CD4-positive, alpha-beta T cell (primary cell): ENCODE measurements at regions of chr9 and their contacts with region 1.

Region 1: DNA sequence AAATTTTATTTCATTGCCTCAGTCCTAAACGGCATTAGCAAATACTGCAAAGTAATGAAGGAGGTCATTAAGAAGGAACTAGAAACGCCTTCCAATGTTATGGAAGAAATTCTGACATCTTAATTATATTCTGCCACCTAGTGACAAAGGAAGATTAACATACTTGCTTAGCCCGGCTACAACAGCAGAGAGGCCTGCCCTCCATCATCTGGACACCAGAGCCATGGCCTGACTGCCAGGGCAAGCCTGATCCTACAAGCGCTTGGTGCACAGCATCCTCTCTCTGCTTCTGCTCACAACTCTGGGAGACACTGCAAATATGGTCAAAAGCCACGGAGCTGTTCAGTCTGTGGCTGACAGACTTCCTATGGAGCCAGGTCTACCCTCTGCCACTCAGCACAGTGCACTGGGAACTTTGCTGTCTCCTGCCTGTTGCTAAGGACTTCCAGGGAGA is 87.3 kb upstream of the SLC44A1 start:
- DNase-seq: peak in 8 of 14 experiments; percentile 1 to 68 (median 30)
- ATAC-seq: peak; percentile 80
- H3K4me3 ChIP-seq: no peak overlapping the region
- H3K4me3 Mint-ChIP-seq: no peak overlapping the region
- H3K27ac ChIP-seq: no peak overlapping the region
- H3K27ac Mint-ChIP-seq: no peak overlapping the region
- H3K4me1 ChIP-seq: peaks cover 12% of the 10 kb centered on the region
- H3K4me1 Mint-ChIP-seq: peaks cover 34% of the 10 kb centered on the region
- H3K27me3 ChIP-seq: no peaks in the 10 kb centered on the region
- H3K27me3 Mint-ChIP-seq: no peaks in the 10 kb centered on the region
- CTCF ChIP-seq: peak; percentile 72

Region 2: DNA sequence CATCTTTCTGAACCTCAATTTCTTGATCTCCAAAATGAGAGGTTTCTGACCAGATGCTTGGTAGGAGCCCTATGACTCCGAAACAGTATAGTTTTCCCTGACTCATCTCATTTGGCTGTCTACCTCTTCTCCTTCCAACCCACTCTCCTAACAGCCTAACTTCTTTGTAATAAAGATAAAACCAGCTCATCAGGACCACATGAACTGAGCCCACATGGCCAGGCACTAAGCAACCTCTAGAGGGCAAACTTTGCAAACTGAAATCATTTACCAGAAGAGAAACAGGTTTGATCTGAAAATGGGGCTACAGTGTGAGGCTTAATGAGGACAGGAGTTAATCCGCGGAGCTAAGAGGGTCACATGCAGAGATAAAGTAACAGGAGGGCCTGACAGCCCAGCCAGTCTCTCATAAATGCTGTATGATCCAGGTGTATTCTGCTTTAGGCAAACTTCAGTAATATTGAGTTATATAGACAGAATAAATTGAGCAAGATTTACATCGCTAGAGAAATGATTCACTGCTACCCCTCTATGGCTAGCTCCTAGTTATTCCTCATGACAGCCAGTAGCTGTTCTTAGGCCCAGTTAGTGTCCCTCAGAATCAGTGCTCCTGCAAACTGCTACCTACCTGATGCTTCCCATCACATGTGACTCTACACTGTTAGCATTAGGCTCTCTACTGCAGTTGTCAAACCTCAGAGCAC is 293.8 kb before region 1 on chr9:
- CTCF ChIA-PET with region 1: interaction called, 3 read pairs
- POLR2A ChIA-PET with region 1: no interaction called
- intact Hi-C with region 1: loop called (anchors 1 kb)
- DNase-seq: peak; percentile 9 to 78 (median 32)
- ATAC-seq: peak; percentile 92
- H3K4me3 ChIP-seq: no peak overlapping the region
- H3K4me3 Mint-ChIP-seq: no peak overlapping the region
- H3K27ac ChIP-seq: no peak overlapping the region
- H3K27ac Mint-ChIP-seq: no peak overlapping the region
- H3K4me1 ChIP-seq: no peaks in the 10 kb centered on the region
- H3K4me1 Mint-ChIP-seq: peaks cover 12% of the 10 kb centered on the region
- H3K27me3 ChIP-seq: no peaks in the 10 kb centered on the region
- H3K27me3 Mint-ChIP-seq: no peaks in the 10 kb centered on the region
- CTCF ChIP-seq: peak; percentile 77

Region 3: DNA sequence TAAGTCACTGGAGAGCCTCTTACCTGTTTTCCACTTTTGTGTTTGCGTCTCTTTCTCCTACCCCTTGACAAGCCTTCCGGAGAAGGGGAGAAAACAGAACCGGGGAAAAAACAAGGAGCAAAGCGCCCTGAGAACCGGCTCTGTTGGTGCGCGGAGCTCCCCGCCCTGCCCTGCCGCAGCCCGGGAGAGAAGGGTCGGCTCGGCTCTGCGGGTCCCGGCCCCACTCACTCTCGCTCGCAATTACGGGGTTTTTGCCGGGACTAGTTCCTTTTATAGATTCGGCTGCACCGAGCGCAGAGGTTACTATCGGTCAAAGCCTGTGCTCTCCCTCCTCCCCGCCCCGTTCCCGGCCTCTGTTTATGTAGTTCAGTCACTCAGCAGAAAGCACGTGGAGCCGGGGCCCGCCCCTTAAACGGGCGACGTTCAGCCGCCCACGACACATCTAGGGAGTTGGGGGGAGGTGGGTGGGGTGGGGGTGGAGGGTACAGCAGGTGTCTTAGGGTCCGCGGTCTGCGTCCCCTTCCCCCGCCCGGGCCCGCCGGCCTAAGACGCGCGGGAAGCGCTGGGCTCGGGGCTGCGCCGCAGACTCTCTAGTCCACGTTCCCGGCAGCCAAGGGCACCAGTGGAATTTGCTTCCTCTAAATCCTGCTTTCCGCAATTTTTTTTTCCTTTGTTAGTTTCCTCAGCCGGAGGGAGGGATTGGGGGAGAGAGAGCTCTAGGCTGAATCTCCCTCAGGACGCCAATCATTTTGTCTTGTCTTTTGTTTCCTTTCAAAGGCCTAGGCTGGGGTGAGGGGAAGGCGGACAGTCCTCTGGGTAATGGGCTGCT is 229.0 kb before region 1 on chr9 and contains the start of gene ABCA1:
- CTCF ChIA-PET with region 1: no interaction called
- POLR2A ChIA-PET with region 1: no interaction called
- intact Hi-C with region 1: loop called (anchors 1 to 2 kb)
- DNase-seq: peak; percentile 57 to 89 (median 74)
- ATAC-seq: peak; percentile 81
- H3K4me3 ChIP-seq: peak within 1 kb of the TSS; percentile 69
- H3K4me3 Mint-ChIP-seq: peak within 1 kb of the TSS; percentile 92
- H3K27ac ChIP-seq: peak within 1 kb of the TSS in 1 of 2 donors; percentile 15
- H3K27ac Mint-ChIP-seq: peak within 1 kb of the TSS; percentile 86
- H3K4me1 ChIP-seq: peaks cover 27% of the 10 kb centered on the region
- H3K4me1 Mint-ChIP-seq: peaks cover 26% of the 10 kb centered on the region
- H3K27me3 ChIP-seq: no peaks in the 10 kb centered on the region
- H3K27me3 Mint-ChIP-seq: no peaks in the 10 kb centered on the region
- CTCF ChIP-seq: no peak
- total RNA-seq, gene ABCA1: 14.1 to 16.9 TPM

Region 4: DNA sequence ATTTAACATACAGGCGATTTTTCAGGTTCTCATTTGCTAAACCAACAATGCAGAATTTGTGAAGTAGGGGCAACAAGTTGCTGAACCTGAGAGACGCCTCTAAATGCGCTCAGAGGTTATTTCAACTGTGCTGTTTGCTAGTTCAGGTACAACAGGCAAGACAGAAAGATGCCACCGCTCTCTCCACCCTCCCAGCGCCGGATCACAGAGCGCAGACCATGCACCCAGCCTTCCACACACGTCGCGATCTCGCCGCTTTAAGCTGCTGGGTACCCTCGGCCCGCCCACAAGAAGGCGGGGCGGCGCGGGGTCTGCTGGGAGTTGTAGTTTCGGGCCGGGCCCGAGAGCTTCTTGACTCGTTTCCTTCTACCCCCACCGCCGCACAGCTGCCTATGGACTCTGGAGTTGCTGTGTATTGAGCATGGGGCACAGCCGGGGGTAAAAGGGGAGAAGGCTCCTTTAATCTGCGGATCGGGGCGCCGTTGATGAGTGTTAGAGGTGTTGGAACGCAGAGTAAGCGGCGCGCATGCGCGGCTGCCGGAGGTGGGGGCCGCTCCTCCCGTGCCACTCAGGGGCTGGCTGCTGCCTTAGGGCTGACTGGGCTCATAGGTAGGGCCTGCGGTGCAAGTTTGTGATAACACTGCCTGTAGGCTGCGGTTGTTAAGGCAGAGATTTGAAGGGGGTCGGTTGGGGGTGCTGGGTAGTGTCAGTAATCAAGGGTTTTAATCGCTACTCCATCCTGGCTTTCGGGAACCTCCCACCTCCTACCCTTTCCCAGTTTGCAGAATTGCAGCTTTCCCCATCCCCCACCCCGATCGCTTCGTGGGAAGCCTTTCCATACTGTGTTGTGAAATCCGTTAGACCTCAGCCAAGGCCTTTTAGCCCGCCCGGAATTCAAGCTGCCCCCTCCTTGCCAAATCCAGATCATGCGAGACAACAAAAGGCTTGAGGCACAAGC is 188.9 kb before region 1 on chr9:
- CTCF ChIA-PET with region 1: no interaction called
- POLR2A ChIA-PET with region 1: no interaction called
- intact Hi-C with region 1: loop called in 1 of 2 experiments (anchors 10 kb)
- DNase-seq: peak; percentile 80 to 92 (median 86)
- ATAC-seq: peak; percentile 97
- H3K4me3 ChIP-seq: peak overlapping the region; percentile 75
- H3K4me3 Mint-ChIP-seq: peak overlapping the region; percentile 95
- H3K27ac ChIP-seq: no peak overlapping the region
- H3K27ac Mint-ChIP-seq: peak overlapping the region; percentile 77
- H3K4me1 ChIP-seq: peaks cover 14% of the 10 kb centered on the region
- H3K4me1 Mint-ChIP-seq: peaks cover 27% of the 10 kb centered on the region
- H3K27me3 ChIP-seq: no peaks in the 10 kb centered on the region
- H3K27me3 Mint-ChIP-seq: peaks cover 8% of the 10 kb centered on the region
- CTCF ChIP-seq: no peak

Region 5: DNA sequence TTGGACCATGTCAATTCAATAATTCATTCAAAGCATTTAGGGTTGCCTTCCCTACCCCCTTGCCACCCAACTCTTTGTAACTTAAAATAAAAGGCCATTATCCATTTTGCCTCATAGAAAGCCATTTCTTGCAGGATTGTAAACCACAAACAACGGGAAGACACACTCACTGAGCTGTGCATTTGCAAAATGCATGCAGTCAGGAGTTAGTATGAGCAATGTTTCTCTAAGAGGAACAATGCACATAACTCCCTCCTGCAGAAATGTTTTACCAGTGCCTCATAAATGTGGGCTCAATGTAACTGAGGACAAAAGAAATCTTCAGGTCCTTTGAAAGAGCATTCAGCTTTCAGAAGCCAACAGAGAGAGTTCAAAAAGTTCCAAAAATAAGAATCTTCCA is 130.7 kb before region 1 on chr9:
- CTCF ChIA-PET with region 1: no interaction called
- POLR2A ChIA-PET with region 1: no interaction called
- intact Hi-C with region 1: no loop called
- DNase-seq: no peak
- ATAC-seq: no peak
- H3K4me3 ChIP-seq: no peak overlapping the region
- H3K4me3 Mint-ChIP-seq: no peak overlapping the region
- H3K27ac ChIP-seq: no peak overlapping the region
- H3K27ac Mint-ChIP-seq: no peak overlapping the region
- H3K4me1 ChIP-seq: no peaks in the 10 kb centered on the region
- H3K4me1 Mint-ChIP-seq: no peaks in the 10 kb centered on the region
- H3K27me3 ChIP-seq: no peaks in the 10 kb centered on the region
- H3K27me3 Mint-ChIP-seq: no peaks in the 10 kb centered on the region
- CTCF ChIP-seq: no peak

Region 6: GRCh38 chr9:105093685-105094084 is 63.5 kb before region 1 on chr9:
- CTCF ChIA-PET with region 1: no interaction called
- POLR2A ChIA-PET with region 1: no interaction called
- intact Hi-C with region 1: loop called in 1 of 2 experiments (anchors 10 kb)
- DNase-seq: no peak
- ATAC-seq: no peak
- H3K4me3 ChIP-seq: no peak overlapping the region
- H3K4me3 Mint-ChIP-seq: no peak overlapping the region
- H3K27ac ChIP-seq: no peak overlapping the region
- H3K27ac Mint-ChIP-seq: no peak overlapping the region
- H3K4me1 ChIP-seq: no peaks in the 10 kb centered on the region
- H3K4me1 Mint-ChIP-seq: no peaks in the 10 kb centered on the region
- H3K27me3 ChIP-seq: no peaks in the 10 kb centered on the region
- H3K27me3 Mint-ChIP-seq: no peaks in the 10 kb centered on the region
- CTCF ChIP-seq: no peak

Region 7: DNA sequence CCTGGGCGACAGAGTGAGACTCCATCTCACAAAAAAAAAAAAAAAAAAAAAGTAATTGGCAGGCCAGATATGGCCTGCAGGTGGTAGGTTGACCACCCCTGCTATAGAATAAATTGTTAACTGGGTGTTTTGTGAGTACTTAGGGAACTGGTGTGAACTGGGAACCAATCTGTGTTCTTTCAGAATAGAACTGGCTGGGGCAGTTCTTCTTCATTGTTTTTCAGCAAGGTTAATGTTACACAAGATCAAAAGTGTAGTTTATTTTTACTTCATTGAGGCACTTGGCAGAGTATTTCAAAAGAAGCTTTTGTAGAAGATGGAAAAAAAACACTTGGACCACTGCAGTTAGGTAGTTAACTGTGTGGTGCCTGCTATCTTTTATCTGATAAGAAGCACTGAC is 214.5 kb after region 1 on chr9:
- CTCF ChIA-PET with region 1: no interaction called
- POLR2A ChIA-PET with region 1: no interaction called
- intact Hi-C with region 1: no loop called
- DNase-seq: no peak
- ATAC-seq: no peak
- H3K4me3 ChIP-seq: no peak overlapping the region
- H3K4me3 Mint-ChIP-seq: no peak overlapping the region
- H3K27ac ChIP-seq: no peak overlapping the region
- H3K27ac Mint-ChIP-seq: no peak overlapping the region
- H3K4me1 ChIP-seq: no peaks in the 10 kb centered on the region
- H3K4me1 Mint-ChIP-seq: no peaks in the 10 kb centered on the region
- H3K27me3 ChIP-seq: no peaks in the 10 kb centered on the region
- H3K27me3 Mint-ChIP-seq: no peaks in the 10 kb centered on the region
- CTCF ChIP-seq: no peak